ENCODE measurements at regions of chr1 and their contacts with region 1.

Region 1: GRCh38 chr1:204363335-204364124 is 3.8 kb upstream of the PLEKHA6 start:
- DNase-seq: peak; percentile 76 to 81
- ATAC-seq: peak; percentile 70 to 85 (median 84)
- H3K4me3 ChIP-seq: peak overlapping the region in 9 of 10 donors; percentile 24 to 59 (median 47)
- H3K27ac ChIP-seq: peak overlapping the region in 9 of 10 donors; percentile 57 to 81 (median 69)
- H3K4me1 ChIP-seq: peaks cover 4 to 57% (median 34%) of the 10 kb centered on the region in 9 donors
- H3K27me3 ChIP-seq: peaks cover 0 to 17% (median 0%) of the 10 kb centered on the region in 7 donors
- CTCF ChIP-seq: peak; percentile 93 to 98 (median 96)

Region 2: DNA sequence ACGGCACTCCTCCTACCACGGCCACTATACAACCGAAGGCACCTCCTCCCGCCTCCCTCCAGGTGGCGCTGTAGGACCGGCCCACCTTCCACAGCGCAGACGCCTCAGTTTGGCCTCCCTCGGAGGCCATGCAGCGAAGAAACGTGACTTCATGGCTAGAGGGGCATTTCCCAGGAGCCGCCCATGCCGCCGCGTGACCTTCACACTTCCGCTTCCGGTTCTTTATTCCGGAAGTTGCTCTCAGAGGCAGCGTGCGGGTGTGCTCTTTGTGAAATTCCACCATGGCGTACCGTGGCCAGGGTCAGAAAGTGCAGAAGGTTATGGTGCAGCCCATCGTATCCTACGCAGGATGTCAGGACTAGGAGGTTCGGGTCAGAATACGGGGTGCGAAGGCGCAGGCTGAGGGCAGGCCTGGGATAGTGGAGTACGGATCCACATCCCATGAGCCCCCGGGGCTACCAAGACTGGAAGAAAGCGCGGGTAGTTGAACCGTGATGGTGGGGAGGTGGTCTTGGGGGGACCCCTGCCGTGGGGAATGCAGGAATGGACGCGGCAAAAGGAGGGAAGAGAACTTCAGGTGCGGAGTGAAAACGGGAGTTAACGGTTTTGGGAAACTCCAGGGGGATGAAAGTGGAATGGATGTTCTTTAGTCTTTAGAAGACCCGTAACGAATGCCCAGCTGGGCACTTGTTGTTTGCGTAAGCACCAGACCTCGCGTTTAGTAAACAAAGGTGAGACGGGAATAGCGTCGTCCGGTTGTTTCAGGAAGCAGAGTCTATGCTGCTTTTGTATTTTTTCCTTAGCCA is 501.9 kb before region 1 on chr1 and contains the start of gene SNRPE:
- intact Hi-C with region 1: loop called in 3 of 10 experiments (anchors 10 kb)
- DNase-seq: peak; percentile 94 to 96
- ATAC-seq: peak; percentile 98 to 99 (median 99)
- H3K4me3 ChIP-seq: peak within 1 kb of the TSS; percentile 43 to 90 (median 82)
- H3K27ac ChIP-seq: peak within 1 kb of the TSS in 9 of 10 donors; percentile 49 to 85 (median 70)
- H3K4me1 ChIP-seq: peaks cover 8 to 27% (median 16%) of the 10 kb centered on the region in 9 donors
- H3K27me3 ChIP-seq: no peaks in the 10 kb centered on the region
- CTCF ChIP-seq: peak; percentile 83 to 98 (median 97)
- total RNA-seq, gene SNRPE: 41.6 to 70.6 (median 50.4) TPM

Region 3: GRCh38 chr1:204213668-204214662 is 149.6 kb before region 1 on chr1 and contains the start of gene GOLT1A:
- intact Hi-C with region 1: loop called (anchors 1 to 5 kb)
- DNase-seq: peak; percentile 57 to 58
- ATAC-seq: peak; percentile 51 to 83 (median 79)
- H3K4me3 ChIP-seq: peak within 1 kb of the TSS in 8 of 10 donors; percentile 14 to 40 (median 27)
- H3K27ac ChIP-seq: no peak within 1 kb of the TSS
- H3K4me1 ChIP-seq: peaks cover 0 to 13% (median 7%) of the 10 kb centered on the region in 9 donors
- H3K27me3 ChIP-seq: peaks cover 0 to 11% (median 0%) of the 10 kb centered on the region in 7 donors
- CTCF ChIP-seq: peak; percentile 49 to 80 (median 72)
- total RNA-seq, gene GOLT1A: not detected

Region 4: GRCh38 chr1:204219971-204220608 is 143.4 kb before region 1 on chr1:
- intact Hi-C with region 1: loop called in 3 of 10 experiments (anchors 2 kb)
- DNase-seq: no peak
- ATAC-seq: no peak
- H3K4me3 ChIP-seq: no peak overlapping the region
- H3K27ac ChIP-seq: no peak overlapping the region
- H3K4me1 ChIP-seq: peaks cover 0 to 11% (median 0%) of the 10 kb centered on the region in 9 donors
- H3K27me3 ChIP-seq: no peaks in the 10 kb centered on the region
- CTCF ChIP-seq: no peak

Region 5: DNA sequence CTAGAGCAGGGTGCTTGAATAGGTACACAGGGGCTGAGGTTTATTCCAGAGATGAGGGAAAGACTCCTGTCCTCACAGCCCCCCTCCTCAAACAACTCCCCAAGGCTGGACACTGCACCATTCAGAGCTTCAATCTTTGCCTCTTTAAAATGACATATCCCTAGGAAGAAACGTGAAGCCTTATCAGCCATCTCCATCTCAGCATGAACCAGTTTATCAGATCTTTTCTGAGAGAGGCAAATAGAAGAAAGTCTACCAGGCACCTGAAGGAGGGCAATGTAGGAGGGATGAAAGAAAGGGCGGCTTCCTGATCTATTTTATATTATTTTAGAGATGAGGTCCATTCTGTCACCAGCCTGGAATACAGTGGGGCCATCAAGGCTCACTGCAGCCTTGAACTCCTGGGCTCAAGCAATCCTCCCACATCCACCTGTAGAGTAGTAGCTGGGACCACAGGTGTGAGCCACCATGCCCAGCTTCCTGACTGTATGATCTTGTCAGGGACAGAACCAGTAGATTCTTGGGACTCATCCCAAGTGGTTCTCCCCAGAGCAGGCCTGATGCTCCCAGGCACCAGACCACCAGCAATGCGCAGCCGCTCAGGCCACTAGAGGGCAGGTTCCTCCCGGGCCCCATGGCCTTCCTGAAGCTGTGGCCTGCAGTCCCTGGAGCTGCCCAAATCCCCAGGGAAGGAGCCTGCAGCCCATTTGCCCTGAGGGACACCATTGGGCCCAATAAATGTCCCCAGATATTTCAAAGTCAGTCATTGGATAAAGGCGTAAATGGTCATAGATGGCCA is 105.4 kb before region 1 on chr1:
- intact Hi-C with region 1: loop called (anchors 1 to 10 kb)
- DNase-seq: peak; percentile 59 to 64
- ATAC-seq: peak; percentile 56 to 82 (median 68)
- H3K4me3 ChIP-seq: no peak overlapping the region
- H3K27ac ChIP-seq: no peak overlapping the region
- H3K4me1 ChIP-seq: peaks cover 0 to 18% (median 7%) of the 10 kb centered on the region in 9 donors
- H3K27me3 ChIP-seq: no peaks in the 10 kb centered on the region
- CTCF ChIP-seq: peak; percentile 44 to 77 (median 69)

Region 6: GRCh38 chr1:204263254-204263910 is 100.1 kb before region 1 on chr1:
- intact Hi-C with region 1: loop called (anchors 1 to 10 kb)
- DNase-seq: peak in 1 of 2 donors; percentile 45
- ATAC-seq: peak in 5 of 8 donors; percentile 25 to 62 (median 43)
- H3K4me3 ChIP-seq: no peak overlapping the region
- H3K27ac ChIP-seq: peak overlapping the region in 6 of 10 donors; percentile 13 to 47 (median 28)
- H3K4me1 ChIP-seq: peaks cover 20 to 46% (median 32%) of the 10 kb centered on the region in 9 donors
- H3K27me3 ChIP-seq: no peaks in the 10 kb centered on the region
- CTCF ChIP-seq: no peak

Region 7: GRCh38 chr1:204398217-204399081 is 34.9 kb after region 1 on chr1:
- intact Hi-C with region 1: no loop called
- DNase-seq: peak; percentile 19 to 44
- ATAC-seq: peak; percentile 66 to 85 (median 81)
- H3K4me3 ChIP-seq: no peak overlapping the region
- H3K27ac ChIP-seq: peak overlapping the region in 1 of 10 donors; percentile 33
- H3K4me1 ChIP-seq: peaks cover 0 to 4% (median 0%) of the 10 kb centered on the region in 9 donors
- H3K27me3 ChIP-seq: no peaks in the 10 kb centered on the region
- CTCF ChIP-seq: peak; percentile 73 to 88 (median 82)

Region 8: DNA sequence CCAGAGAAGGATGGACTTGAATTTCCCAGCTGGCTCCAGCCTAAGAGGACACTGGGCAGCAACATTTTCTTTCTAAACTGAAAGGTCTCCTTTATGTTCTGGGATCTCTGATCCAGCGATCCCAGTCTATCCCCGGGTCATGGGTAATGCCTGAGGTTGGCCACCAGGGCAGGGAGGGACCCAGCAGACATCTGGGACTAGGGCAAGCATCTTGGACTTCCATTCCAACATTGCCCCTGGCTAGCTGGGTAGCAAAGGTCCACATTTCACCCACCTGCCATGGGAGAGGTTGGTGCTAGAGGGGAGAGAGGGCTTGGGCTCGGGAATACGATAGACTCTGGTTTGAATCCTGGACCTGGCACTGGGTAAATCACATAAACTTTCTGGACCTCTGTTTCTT is 237.4 kb after region 1 on chr1:
- intact Hi-C with region 1: no loop called
- DNase-seq: no peak
- ATAC-seq: no peak
- H3K4me3 ChIP-seq: no peak overlapping the region
- H3K27ac ChIP-seq: no peak overlapping the region
- H3K4me1 ChIP-seq: no peaks in the 10 kb centered on the region
- H3K27me3 ChIP-seq: peaks cover 0 to 29% (median 13%) of the 10 kb centered on the region in 7 donors
- CTCF ChIP-seq: no peak

Measured in heart right ventricle (tissue), 16 donors.